Caco-2 (cell line): ENCODE measurements at regions of chr6 and their contacts with region 1.

Region 1: GRCh38 chr6:32153564-32154513 is at the start of gene PPT2:
- DNase-seq: peak; percentile 86 to 88
- H3K4me3 ChIP-seq: peak within 1 kb of the TSS; percentile 90
- H3K4me3 Mint-ChIP-seq: peak within 1 kb of the TSS; percentile 86
- H3K27ac Mint-ChIP-seq: peak within 1 kb of the TSS; percentile 96
- H3K4me1 ChIP-seq: peaks cover 24% of the 10 kb centered on the region
- H3K4me1 Mint-ChIP-seq: peaks cover 18% of the 10 kb centered on the region
- H3K27me3 ChIP-seq: no peaks in the 10 kb centered on the region
- H3K27me3 Mint-ChIP-seq: no peaks in the 10 kb centered on the region
- CTCF ChIP-seq: peak; percentile 43 to 45
- total RNA-seq, gene PPT2: 80.8 and 92.5 TPM in 2 replicates

Region 2: GRCh38 chr6:32060966-32061655 is 92.7 kb before region 1 on chr6:
- CTCF ChIA-PET with region 1: no interaction called
- POLR2A ChIA-PET with region 1: interaction called, 3 read pairs
- intact Hi-C with region 1: loop called (anchors 1 kb)
- DNase-seq: peak in 1 of 2 experiments; percentile 38
- H3K4me3 ChIP-seq: no peak overlapping the region
- H3K4me3 Mint-ChIP-seq: peak overlapping the region; percentile 51
- H3K27ac Mint-ChIP-seq: no peak overlapping the region
- H3K4me1 ChIP-seq: no peaks in the 10 kb centered on the region
- H3K4me1 Mint-ChIP-seq: no peaks in the 10 kb centered on the region
- H3K27me3 ChIP-seq: no peaks in the 10 kb centered on the region
- H3K27me3 Mint-ChIP-seq: peaks cover 10% of the 10 kb centered on the region
- CTCF ChIP-seq: peak in 1 of 2 experiments; percentile 44

Region 3: GRCh38 chr6:32118782-32119628 is 34.8 kb before region 1 on chr6:
- CTCF ChIA-PET with region 1: interaction called, 11 read pairs
- POLR2A ChIA-PET with region 1: no interaction called
- intact Hi-C with region 1: loop called (anchors 1 kb)
- DNase-seq: peak; percentile 86 to 91
- H3K4me3 ChIP-seq: no peak overlapping the region
- H3K4me3 Mint-ChIP-seq: peak overlapping the region; percentile 60
- H3K27ac Mint-ChIP-seq: peak overlapping the region; percentile 77
- H3K4me1 ChIP-seq: peaks cover 4% of the 10 kb centered on the region
- H3K4me1 Mint-ChIP-seq: peaks cover 16% of the 10 kb centered on the region
- H3K27me3 ChIP-seq: no peaks in the 10 kb centered on the region
- H3K27me3 Mint-ChIP-seq: no peaks in the 10 kb centered on the region
- CTCF ChIP-seq: peak; percentile 89 to 95

Region 4: GRCh38 chr6:32127717-32128592 is 25.9 kb before region 1 on chr6 and contains the start of gene ATF6B:
- CTCF ChIA-PET with region 1: interaction called, 4 read pairs
- POLR2A ChIA-PET with region 1: interaction called, 8 read pairs
- intact Hi-C with region 1: loop called (anchors 1 kb)
- DNase-seq: peak; percentile 96 to 99
- H3K4me3 ChIP-seq: peak within 1 kb of the TSS; percentile 75
- H3K4me3 Mint-ChIP-seq: peak within 1 kb of the TSS; percentile 99
- H3K27ac Mint-ChIP-seq: peak within 1 kb of the TSS; percentile 99
- H3K4me1 ChIP-seq: peaks cover 17% of the 10 kb centered on the region
- H3K4me1 Mint-ChIP-seq: peaks cover 26% of the 10 kb centered on the region
- H3K27me3 ChIP-seq: no peaks in the 10 kb centered on the region
- H3K27me3 Mint-ChIP-seq: no peaks in the 10 kb centered on the region
- CTCF ChIP-seq: no peak
- total RNA-seq, gene ATF6B: 61.5 and 64.9 TPM in 2 replicates

Region 5: DNA sequence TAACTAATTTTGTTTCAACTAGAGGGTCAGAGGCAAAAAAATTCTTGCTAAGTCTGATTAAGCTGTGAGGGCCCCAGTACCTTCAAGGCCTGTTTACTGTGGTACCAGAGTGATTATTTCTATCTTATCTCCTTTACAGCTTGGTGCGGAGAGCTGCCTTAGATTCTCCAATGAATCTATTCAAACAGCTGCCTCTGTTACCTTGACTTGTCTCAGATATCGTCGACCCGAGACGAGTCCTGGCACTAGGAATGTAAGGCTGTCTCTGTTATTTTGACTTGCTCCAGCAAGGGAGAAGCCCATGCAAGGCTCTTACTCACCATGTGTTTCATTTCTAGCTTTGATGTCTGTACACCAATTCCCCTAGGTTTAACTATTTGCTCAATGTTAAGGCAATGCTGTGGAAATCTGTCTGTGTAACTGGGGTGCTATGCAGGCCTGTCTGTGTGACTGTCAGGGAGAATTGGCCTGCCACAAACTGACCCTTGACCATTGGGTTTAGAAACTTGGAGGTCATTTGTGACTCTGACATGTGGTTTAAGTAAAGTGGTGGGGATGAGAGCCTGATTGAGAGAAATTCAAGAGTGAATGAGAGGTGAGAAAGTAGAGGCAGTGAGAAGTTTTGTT is 13.3 kb before region 1 on chr6:
- CTCF ChIA-PET with region 1: interaction called, 5 read pairs
- POLR2A ChIA-PET with region 1: interaction called, 3 read pairs
- intact Hi-C with region 1: loop called (anchors 1 kb)
- DNase-seq: peak in 1 of 2 experiments; percentile 35
- H3K4me3 ChIP-seq: no peak overlapping the region
- H3K4me3 Mint-ChIP-seq: peak overlapping the region; percentile 42
- H3K27ac Mint-ChIP-seq: peak overlapping the region; percentile 39
- H3K4me1 ChIP-seq: peaks cover 50% of the 10 kb centered on the region
- H3K4me1 Mint-ChIP-seq: peaks cover 24% of the 10 kb centered on the region
- H3K27me3 ChIP-seq: no peaks in the 10 kb centered on the region
- H3K27me3 Mint-ChIP-seq: no peaks in the 10 kb centered on the region
- CTCF ChIP-seq: no peak

Region 6: DNA sequence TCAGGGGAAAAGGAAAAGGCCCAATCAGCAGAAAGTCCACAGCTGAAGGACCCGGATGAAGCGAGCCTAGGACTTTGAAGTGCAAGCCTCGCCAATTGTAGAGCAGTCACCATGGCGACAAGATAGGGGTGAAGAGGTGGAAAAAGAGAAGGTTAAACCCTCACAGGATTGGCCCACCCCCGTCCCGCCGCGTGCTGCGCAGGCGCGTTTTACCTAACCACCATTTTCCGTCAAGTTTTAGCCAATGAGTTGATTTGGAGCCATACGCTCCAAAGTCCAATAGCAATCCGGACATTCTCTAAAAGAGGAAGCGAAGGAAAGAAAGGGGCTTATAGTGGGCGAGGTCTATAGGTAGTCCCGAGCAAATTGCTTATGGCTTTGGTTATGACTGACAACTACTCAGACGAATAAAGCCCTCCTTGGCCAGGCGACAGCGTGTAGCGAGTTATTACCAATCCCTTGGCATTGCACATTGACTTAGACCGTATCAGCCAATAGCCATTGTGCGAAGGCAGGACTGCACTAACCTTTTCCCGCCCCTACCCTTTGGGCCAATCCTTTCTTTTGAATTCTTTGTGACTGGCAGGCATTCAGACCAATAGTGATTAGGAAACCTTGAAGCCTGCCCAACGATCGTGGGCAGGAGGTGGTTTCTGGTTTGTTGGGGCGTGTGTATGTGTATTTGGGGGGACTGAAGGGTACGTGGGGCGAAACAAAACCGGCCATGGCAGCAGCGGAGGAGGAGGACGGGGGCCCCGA is 24.1 kb after region 1 on chr6 and contains the start of gene RNF5:
- CTCF ChIA-PET with region 1: no interaction called
- POLR2A ChIA-PET with region 1: no interaction called
- intact Hi-C with region 1: loop called (anchors 1 kb)
- DNase-seq: peak; percentile 97 to 99
- H3K4me3 ChIP-seq: peak within 1 kb of the TSS; percentile 87
- H3K4me3 Mint-ChIP-seq: peak within 1 kb of the TSS; percentile 81
- H3K27ac Mint-ChIP-seq: peak within 1 kb of the TSS; percentile 94
- H3K4me1 ChIP-seq: peaks cover 15% of the 10 kb centered on the region
- H3K4me1 Mint-ChIP-seq: peaks cover 46% of the 10 kb centered on the region
- H3K27me3 ChIP-seq: no peaks in the 10 kb centered on the region
- H3K27me3 Mint-ChIP-seq: no peaks in the 10 kb centered on the region
- CTCF ChIP-seq: no peak
- total RNA-seq, gene RNF5: 64.7 and 70.7 TPM in 2 replicates

Region 7: GRCh38 chr6:32195652-32195901 is 41.7 kb after region 1 on chr6:
- CTCF ChIA-PET with region 1: interaction called, 8 read pairs
- POLR2A ChIA-PET with region 1: interaction called, 13 read pairs
- intact Hi-C with region 1: loop called (anchors 1 kb)
- DNase-seq: peak; percentile 100
- H3K4me3 ChIP-seq: peak overlapping the region; percentile 95
- H3K4me3 Mint-ChIP-seq: peak overlapping the region; percentile 94
- H3K27ac Mint-ChIP-seq: peak overlapping the region; percentile 99
- H3K4me1 ChIP-seq: peaks cover 15% of the 10 kb centered on the region
- H3K4me1 Mint-ChIP-seq: peaks cover 16% of the 10 kb centered on the region
- H3K27me3 ChIP-seq: no peaks in the 10 kb centered on the region
- H3K27me3 Mint-ChIP-seq: no peaks in the 10 kb centered on the region
- CTCF ChIP-seq: peak; percentile 17 to 70

Region 8: GRCh38 chr6:32234934-32235333 is 81.1 kb after region 1 on chr6:
- CTCF ChIA-PET with region 1: no interaction called
- POLR2A ChIA-PET with region 1: no interaction called
- intact Hi-C with region 1: no loop called
- DNase-seq: peak in 1 of 2 experiments; percentile 32
- H3K4me3 ChIP-seq: no peak overlapping the region
- H3K4me3 Mint-ChIP-seq: no peak overlapping the region
- H3K27ac Mint-ChIP-seq: no peak overlapping the region
- H3K4me1 ChIP-seq: no peaks in the 10 kb centered on the region
- H3K4me1 Mint-ChIP-seq: peaks cover 7% of the 10 kb centered on the region
- H3K27me3 ChIP-seq: no peaks in the 10 kb centered on the region
- H3K27me3 Mint-ChIP-seq: no peaks in the 10 kb centered on the region
- CTCF ChIP-seq: peak in 1 of 2 experiments; percentile 19